K562 (cell line): ENCODE measurements at regions of chr1 and their contacts with region 1.

Region 1: GRCh38 chr1:8848663-8849386 is 29.7 kb downstream of the ENO1 start:
- DNase-seq: peak; percentile 91 to 96 (median 94)
- ATAC-seq: peak; percentile 97
- H3K4me3 ChIP-seq: no peak overlapping the region
- H3K27ac ChIP-seq: no peak overlapping the region
- H3K4me1 ChIP-seq: peaks cover 7 to 20% of the 10 kb centered on the region in 2 experiments; a peak in 4 of 5 replicates
- H3K27me3 ChIP-seq: no peaks in the 10 kb centered on the region
- CTCF ChIP-seq: peak; percentile 93 to 99 (median 98)
- EP300 ChIP-seq: no peak
- POLR2A ChIP-seq: no peak
- RAD21 ChIP-seq: peak; percentile 92 to 98

Region 2: DNA sequence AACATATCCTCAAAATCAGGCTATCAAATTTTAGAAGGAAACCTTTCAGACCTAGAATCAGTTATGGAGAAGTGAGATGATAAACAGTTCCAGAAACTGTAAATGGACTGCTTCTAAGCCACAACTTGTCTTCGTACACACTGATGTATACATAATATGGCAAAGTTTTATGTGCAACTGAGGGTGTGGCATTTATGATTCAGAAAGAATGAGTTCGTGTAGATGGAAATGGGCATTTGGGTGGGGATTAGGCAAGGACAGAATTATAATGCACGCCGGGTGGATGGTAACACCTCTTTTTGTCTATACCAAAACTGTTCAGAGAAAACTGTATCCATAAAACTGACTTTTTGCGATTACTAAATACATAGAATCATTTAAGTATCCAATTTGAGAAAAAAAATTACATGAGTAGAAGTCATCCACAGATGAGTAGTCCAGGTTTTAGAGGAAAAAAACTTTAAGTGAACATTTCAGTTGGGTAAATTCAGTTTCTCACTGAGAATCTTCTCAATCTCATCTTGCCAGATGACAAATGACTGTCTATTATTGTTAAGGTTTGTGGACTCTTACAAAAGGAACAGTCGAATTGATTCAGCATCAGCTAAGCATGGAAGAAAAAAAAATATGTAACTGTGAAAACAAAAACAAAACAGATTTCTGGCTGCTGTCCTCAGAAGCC is 845.3 kb before region 1 on chr1:
- CTCF ChIA-PET with region 1: no interaction called
- POLR2A ChIA-PET with region 1: no interaction called
- in situ Hi-C with region 1: no loop called
- intact Hi-C with region 1: no loop called
- DNase-seq: no peak
- ATAC-seq: no peak
- H3K4me3 ChIP-seq: no peak overlapping the region
- H3K27ac ChIP-seq: no peak overlapping the region
- H3K4me1 ChIP-seq: peaks cover 22 to 42% of the 10 kb centered on the region in 2 experiments
- H3K27me3 ChIP-seq: no peaks in the 10 kb centered on the region
- CTCF ChIP-seq: no peak
- EP300 ChIP-seq: no peak
- POLR2A ChIP-seq: no peak
- RAD21 ChIP-seq: no peak

Region 3: DNA sequence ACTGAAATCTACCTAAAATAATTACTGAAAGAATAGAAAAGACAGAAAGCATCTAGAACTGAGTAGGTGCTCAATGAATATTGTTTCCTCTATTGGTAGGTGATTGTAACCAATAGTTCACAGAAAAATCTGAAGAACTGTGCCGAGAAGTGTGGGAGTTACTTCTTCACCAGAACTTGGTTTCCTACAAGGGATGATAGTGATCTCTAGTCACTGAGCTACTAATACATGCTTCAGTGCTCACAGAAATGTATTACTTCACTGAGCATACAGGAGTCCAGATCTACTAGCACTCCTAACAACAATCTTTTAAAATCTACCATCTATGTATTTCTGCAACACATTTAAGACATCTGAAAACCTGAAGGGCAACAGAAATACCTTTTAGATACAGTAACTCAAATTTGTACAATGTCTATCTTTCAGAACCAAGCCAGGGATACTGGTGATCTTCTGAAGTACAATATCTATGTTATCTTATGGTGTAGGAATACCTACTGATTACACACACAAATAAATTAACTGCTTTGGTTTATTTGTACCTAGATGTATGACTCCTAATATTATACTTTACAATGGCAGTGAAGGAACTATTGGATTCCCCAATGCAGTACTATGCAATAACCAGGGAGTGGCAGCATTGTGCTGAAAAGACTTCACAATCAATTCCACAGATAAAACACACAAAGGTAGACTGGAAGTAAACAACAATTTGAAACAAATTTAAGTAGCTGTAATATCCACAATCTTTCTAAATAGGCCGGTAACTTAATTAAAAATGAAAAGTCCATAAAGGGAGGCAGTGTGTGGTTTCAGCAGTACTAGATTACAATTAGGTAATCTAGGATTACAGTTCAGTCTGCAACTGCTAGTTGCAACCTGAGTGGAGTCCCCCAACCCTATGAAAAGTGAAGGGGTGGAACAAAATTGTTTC is 287.9 kb before region 1 on chr1:
- CTCF ChIA-PET with region 1: interaction called, 14 read pairs
- POLR2A ChIA-PET with region 1: no interaction called
- in situ Hi-C with region 1: no loop called
- intact Hi-C with region 1: loop called (anchors 1 kb)
- DNase-seq: peak; percentile 52 to 69 (median 55)
- ATAC-seq: peak; percentile 80
- H3K4me3 ChIP-seq: no peak overlapping the region
- H3K27ac ChIP-seq: no peak overlapping the region
- H3K4me1 ChIP-seq: peaks cover 0 to 19% of the 10 kb centered on the region in 2 experiments; a peak in 4 of 5 replicates
- H3K27me3 ChIP-seq: no peaks in the 10 kb centered on the region
- CTCF ChIP-seq: peak; percentile 72 to 98 (median 88)
- EP300 ChIP-seq: 0 out of 2 replicates have a peak, but pooled peaks have one; percentile 2
- POLR2A ChIP-seq: no peak
- RAD21 ChIP-seq: peak; percentile 96 to 99

Region 4: GRCh38 chr1:8727809-8728213 is 121.0 kb before region 1 on chr1:
- CTCF ChIA-PET with region 1: no interaction called
- POLR2A ChIA-PET with region 1: interaction called, 3 read pairs
- in situ Hi-C with region 1: no loop called
- intact Hi-C with region 1: loop called (anchors 5 kb)
- DNase-seq: no peak
- ATAC-seq: no peak
- H3K4me3 ChIP-seq: no peak overlapping the region
- H3K27ac ChIP-seq: no peak overlapping the region
- H3K4me1 ChIP-seq: peaks cover 4 to 5% of the 10 kb centered on the region in 2 experiments; a peak in 3 of 5 replicates
- H3K27me3 ChIP-seq: no peaks in the 10 kb centered on the region
- CTCF ChIP-seq: no peak
- EP300 ChIP-seq: no peak
- POLR2A ChIP-seq: no peak
- RAD21 ChIP-seq: no peak

Region 5: GRCh38 chr1:8816831-8817405 is 31.9 kb before region 1 on chr1:
- CTCF ChIA-PET with region 1: no interaction called
- POLR2A ChIA-PET with region 1: interaction called, 4 read pairs
- in situ Hi-C with region 1: no loop called
- intact Hi-C with region 1: loop called (anchors 1 kb)
- DNase-seq: peak in 3 of 4 experiments; percentile 51 to 53 (median 52)
- ATAC-seq: peak; percentile 50
- H3K4me3 ChIP-seq: peak overlapping the region; percentile 82
- H3K27ac ChIP-seq: peak overlapping the region; percentile 88
- H3K4me1 ChIP-seq: peaks cover 7 to 16% of the 10 kb centered on the region in 2 experiments
- H3K27me3 ChIP-seq: no peaks in the 10 kb centered on the region
- CTCF ChIP-seq: no peak
- EP300 ChIP-seq: no peak
- POLR2A ChIP-seq: no peak
- RAD21 ChIP-seq: no peak

Region 6: DNA sequence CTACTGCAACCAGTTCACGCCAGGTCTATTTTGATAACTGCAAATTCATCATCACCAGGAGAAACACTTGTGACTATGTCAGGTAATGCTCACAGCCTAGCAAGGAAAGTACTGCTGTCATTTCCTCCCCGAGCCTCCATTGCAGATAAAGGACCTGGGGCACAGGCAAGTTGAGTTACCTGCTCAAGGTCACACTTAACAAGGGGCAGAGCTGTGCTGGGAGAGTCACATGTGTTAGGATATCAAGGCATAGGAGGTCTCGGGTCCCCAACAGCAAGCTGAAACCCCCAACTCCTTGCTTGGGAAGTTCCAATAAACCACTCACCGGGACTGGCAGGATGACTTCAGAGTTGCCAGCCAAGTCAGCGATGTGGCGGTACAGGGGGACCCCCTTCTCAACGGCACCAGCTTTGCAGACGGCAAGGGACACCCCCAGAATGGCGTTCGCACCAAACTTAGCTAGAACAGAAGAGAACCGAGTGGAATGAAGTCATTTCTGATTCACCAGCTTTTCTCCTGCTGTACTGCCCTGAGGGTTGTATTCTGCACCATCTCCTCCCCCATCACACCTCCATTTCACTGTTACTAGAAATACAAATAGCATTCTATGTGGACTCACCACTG is 18.1 kb after region 1 on chr1:
- CTCF ChIA-PET with region 1: no interaction called
- POLR2A ChIA-PET with region 1: interaction called, 99 read pairs
- in situ Hi-C with region 1: no loop called
- intact Hi-C with region 1: no loop called
- DNase-seq: no peak
- ATAC-seq: no peak; the same call in 2 of the 3 replicates
- H3K4me3 ChIP-seq: no peak overlapping the region
- H3K27ac ChIP-seq: no peak overlapping the region; the same call in 2 of the 3 replicates
- H3K4me1 ChIP-seq: no peaks in the 10 kb centered on the region; a peak in 3 of 5 replicates
- H3K27me3 ChIP-seq: no peaks in the 10 kb centered on the region
- CTCF ChIP-seq: no peak
- EP300 ChIP-seq: no peak
- POLR2A ChIP-seq: peak; percentile 36; the same call in 1 of the 2 replicates
- RAD21 ChIP-seq: no peak